Sigmoid colon (tissue), 7 donors: ENCODE measurements at regions of chr17 and their contacts with region 1.

Region 1: DNA sequence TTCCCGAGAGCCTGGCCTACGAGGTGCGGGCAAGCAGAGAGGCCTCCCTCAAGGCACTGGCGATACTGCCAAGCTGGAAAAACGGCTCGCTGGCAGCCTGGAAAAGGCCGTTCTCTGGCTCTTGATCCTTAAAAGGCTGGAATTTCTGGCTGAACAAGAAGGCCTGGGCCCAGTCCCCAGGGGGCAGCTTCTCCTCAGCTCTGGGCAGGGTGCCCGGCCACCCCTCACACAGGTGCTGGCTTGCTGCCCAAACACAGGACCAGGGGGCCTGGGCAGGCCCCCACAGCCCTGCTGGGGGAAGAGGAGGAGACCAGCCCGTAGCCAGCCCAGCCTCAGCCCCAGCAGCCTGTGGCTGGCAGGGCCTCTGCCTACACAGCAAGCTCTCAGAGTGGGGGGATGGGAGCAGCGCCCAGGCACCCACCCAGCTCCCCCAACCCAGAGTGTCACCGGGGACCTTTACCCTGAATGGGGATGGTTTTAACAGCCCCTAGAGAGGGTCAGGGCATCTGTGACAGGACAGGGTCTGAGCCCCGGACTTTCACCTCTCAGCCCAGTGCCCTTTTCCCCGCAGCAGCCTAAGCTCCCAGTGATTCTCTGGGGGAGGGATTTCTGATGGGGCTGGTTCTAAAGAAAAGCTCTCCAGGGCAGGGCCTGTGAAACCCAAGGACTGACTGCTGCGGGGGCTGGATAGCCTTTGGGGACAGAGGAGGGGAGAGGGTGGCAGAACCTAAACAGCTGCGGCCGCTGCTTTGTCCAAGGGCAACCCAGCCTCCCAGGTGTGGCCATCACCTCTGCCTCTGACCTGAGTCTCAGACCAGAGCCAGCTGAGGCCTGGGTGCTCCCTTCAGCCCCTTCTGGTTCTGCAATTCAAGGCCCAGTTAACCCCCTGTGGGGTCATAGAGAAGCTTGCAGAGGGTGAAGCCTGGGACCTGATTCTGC is 38.6 kb upstream of the TOB1 start:
- DNase-seq: peak; percentile 91
- H3K4me3 ChIP-seq: no peak overlapping the region
- H3K27ac ChIP-seq: peak overlapping the region; percentile 81 to 98 (median 95)
- H3K4me1 ChIP-seq: peaks cover 4 to 44% (median 41%) of the 10 kb centered on the region in 4 donors
- H3K27me3 ChIP-seq: no peaks in the 10 kb centered on the region
- CTCF ChIP-seq: no peak
- EP300 ChIP-seq: no peak
- POLR2A ChIP-seq: no peak

Region 2: DNA sequence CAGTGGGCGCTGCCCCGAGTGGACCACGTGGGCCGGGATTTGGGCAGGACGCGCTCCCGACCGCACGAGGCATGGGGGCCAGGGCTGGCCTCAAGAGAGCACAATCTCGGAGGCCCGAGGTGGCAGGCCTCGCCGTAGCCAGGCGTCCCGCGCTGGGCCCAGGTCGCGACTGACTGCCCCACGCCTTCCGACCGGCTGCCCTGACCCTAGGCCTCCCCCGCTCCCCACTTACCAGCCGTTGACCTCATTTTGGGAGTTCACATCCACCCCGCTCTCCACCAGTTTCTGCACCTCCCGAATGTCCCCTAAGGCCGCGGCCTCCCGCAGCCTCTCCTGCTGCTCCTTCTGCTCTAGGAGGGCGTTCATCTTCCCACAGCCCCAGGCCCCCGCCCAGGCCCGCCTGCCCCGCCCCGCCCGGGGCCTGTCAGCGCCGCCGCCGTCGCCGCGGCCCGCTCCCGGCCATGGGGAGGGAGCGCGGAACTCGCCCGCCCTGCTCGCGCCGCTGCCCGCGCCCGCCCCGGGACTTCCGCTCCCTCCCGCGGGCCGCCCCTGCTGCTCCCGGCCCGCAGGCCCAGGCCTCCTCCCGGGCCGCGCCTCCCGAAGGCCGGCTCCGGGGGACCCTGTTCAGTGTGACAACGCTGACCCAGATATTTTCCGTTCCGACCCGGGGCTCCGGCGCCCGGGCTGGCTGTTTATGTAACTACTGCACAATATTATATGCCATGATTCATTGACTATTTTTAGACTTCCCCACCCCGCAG is 197.3 kb before region 1 on chr17 and contains the start of gene ANKRD40:
- intact Hi-C with region 1: no loop called
- DNase-seq: peak; percentile 97
- H3K4me3 ChIP-seq: peak within 1 kb of the TSS; percentile 44 to 79 (median 74)
- H3K27ac ChIP-seq: peak within 1 kb of the TSS; percentile 92 to 97 (median 96)
- H3K4me1 ChIP-seq: peaks cover 0 to 64% (median 57%) of the 10 kb centered on the region in 4 donors
- H3K27me3 ChIP-seq: no peaks in the 10 kb centered on the region
- CTCF ChIP-seq: no peak
- EP300 ChIP-seq: peak in 2 of 4 donors; percentile 10 to 33
- POLR2A ChIP-seq: peak in 1 of 2 donors; percentile 41
- total RNA-seq, gene ANKRD40: 51.2 to 76.3 (median 63.7) TPM

Region 3: DNA sequence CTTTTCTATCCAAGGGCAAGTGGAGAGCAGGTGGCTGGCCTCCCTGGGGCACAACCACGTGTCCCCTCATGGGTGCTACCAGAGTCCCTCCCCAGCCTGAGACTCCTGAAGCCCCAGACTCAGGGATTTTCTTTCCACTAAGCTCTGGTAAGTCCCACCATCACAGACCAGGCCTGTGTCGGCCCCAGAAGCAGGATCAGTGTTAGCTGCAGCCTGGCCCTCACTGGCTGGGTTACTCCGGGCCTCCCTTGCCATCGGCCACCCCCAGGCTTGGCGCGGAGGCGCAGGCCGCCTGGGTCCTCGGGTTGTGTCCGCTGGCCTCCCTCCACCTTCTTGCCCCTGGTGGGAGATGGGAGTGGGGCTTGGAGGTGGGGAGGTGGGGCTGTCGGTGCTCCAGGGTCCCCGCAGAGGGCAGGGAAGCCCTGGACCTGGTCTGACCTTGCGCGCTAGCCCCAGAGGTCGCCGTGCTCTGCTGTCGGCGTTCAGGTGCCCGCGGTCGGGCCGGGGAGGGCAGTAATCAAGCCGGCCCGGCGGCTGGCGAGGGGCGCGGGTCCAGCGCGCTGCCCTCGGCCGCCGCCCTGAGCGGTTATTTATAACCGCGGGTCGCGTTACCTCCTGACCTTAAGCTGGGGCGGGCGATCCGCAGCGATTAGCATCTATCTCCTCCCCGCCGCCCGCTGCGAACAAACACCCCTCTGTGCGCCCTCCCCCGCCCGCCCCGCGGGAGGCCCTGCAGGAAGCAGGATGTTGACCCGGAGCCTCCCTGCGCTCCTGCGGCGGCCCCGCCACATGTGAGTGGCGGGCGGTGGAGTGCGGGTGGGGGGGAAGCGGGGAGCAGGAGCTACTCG is 39.5 kb after region 1 on chr17:
- intact Hi-C with region 1: loop called (anchors 5 kb)
- DNase-seq: peak; percentile 88
- H3K4me3 ChIP-seq: peak overlapping the region; percentile 33 to 59 (median 48)
- H3K27ac ChIP-seq: peak overlapping the region; percentile 85 to 89 (median 86)
- H3K4me1 ChIP-seq: peaks cover 0 to 40% (median 39%) of the 10 kb centered on the region in 4 donors
- H3K27me3 ChIP-seq: no peaks in the 10 kb centered on the region
- CTCF ChIP-seq: peak in 2 of 4 experiments; percentile 9 to 16
- EP300 ChIP-seq: no peak
- POLR2A ChIP-seq: peak in 1 of 2 donors; percentile 43